Natural killer cell (primary cell): ENCODE measurements at regions of chr19 and their contacts with region 1.

Region 1: DNA sequence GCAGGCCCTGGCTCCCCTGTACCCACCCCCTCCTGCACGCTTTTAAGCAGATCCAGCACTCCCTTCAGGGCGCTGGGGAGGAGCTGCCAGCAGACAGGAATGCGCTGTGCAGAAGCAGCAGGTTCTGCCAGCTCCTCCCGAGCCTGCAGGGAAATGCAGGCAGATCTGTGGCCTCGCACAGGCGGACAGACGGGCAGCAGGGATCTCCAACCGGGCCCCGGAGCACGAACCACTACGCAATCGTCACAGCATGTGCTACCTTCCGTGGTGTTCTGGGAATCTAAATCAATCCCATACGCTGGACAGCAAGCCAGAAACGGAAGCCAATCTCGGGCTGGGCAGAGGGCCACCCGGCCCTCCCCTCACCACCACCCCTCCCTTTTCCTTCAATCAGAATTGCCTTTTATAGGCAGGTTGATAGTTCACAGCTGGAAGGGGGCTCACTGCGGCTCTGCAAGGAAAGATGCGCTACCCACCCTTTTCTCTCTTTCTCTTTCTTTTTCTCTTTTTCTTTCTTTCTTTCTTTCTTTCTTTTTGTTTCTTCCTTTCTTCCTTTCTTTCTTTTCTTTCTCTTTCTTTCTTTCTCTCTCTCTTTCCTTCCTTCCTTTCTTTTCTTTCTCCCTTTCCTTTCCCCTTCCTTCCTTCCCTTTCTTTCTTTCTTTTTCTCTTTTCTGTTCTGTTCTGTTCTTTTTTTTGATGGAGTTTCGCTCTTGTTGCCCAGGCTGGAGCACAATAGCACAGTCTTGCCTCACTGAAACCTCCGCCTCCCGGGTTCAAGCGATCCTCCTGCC is 99.9 kb downstream of the GNG7 start:
- DNase-seq: no peak
- ATAC-seq: no peak
- H3K4me3 ChIP-seq: no peak overlapping the region
- H3K4me3 Mint-ChIP-seq: no peak overlapping the region
- H3K27ac ChIP-seq: no peak overlapping the region
- H3K27ac Mint-ChIP-seq: no peak overlapping the region
- H3K4me1 ChIP-seq: peaks cover 25% of the 10 kb centered on the region
- H3K4me1 Mint-ChIP-seq: peaks cover 12 to 13% of the 10 kb centered on the region in 2 donors
- H3K27me3 ChIP-seq: no peaks in the 10 kb centered on the region
- H3K27me3 Mint-ChIP-seq: peaks cover under 1 to 3% of the 10 kb centered on the region in 2 donors
- CTCF ChIP-seq: no peak

Region 2: DNA sequence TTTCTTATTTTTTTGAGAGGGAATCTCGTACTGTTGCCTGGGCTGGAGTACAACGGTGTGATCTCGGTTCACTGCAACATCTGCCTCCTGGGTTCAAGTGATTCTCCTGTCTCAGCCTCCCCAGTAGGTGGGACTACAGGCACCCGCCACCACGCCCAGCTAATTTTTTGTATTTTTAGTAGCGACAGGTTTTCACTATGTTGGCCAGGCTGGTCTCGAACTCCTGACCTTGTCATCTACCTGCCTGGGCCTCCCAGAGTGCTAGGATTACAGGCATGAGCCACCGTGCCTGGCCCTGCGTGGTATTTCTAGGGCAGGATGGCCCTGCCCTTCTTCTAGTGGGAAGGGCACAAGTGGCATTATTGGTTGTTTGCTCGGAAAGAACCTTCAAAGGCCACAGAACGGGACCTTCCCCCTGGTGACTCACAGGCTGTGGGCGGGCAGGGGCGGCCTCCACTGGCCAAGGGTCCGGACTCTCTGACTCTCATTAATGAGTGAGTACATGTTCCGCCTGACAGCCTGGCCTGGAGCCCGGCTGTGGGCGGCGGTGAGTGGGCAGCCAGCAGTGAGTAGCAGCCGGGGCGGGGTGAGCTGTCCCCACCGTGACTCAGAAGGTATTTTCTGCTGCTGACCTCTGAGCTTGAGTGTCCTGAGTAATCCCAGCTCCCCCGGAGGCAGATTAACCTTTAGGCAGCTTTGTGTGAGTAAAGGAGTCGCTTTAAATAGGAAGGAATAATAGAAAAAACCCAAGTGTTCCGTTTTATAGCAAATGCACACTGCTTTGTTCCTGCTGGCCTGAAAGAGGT is 433.8 kb before region 1 on chr19:
- intact Hi-C with region 1: loop called (anchors 5 kb)
- DNase-seq: peak; percentile 70 to 86
- ATAC-seq: peak; percentile 68 to 87 (median 74)
- H3K4me3 ChIP-seq: peak overlapping the region; percentile 12
- H3K4me3 Mint-ChIP-seq: peak overlapping the region; percentile 89
- H3K27ac ChIP-seq: peak overlapping the region; percentile 95
- H3K27ac Mint-ChIP-seq: peak overlapping the region; percentile 94 to 98
- H3K4me1 ChIP-seq: peaks cover 75% of the 10 kb centered on the region
- H3K4me1 Mint-ChIP-seq: peaks cover 43 to 59% of the 10 kb centered on the region in 2 donors
- H3K27me3 ChIP-seq: no peaks in the 10 kb centered on the region
- H3K27me3 Mint-ChIP-seq: no peaks in the 10 kb centered on the region
- CTCF ChIP-seq: no peak

Region 3: DNA sequence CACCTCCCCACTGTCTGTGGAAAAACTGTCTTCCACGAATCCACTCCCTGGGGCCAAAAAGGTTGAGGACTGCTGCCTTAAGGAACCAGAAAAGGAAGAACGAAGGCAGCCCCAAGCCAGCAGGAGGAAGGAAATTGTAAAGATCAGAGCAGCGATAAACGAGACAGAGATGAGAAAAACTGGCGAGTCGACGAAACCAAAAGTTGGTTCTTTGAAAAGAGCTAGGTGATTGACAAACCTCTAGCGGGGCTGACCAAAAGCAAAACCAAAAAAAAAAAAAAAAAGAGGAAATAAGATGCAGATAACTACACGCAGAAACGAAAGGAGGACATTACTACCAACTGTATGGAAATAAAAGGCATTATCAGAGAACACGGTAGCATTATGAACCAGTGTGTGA is 49.7 kb before region 1 on chr19:
- intact Hi-C with region 1: loop called (anchors 2 kb)
- DNase-seq: peak in 1 of 2 donors; percentile 87
- ATAC-seq: peak; percentile 79 to 89 (median 87)
- H3K4me3 ChIP-seq: peak overlapping the region; percentile 43
- H3K4me3 Mint-ChIP-seq: peak overlapping the region; percentile 88
- H3K27ac ChIP-seq: peak overlapping the region; percentile 80
- H3K27ac Mint-ChIP-seq: peak overlapping the region; percentile 78 to 84
- H3K4me1 ChIP-seq: peaks cover 28% of the 10 kb centered on the region
- H3K4me1 Mint-ChIP-seq: peaks cover 24 to 26% of the 10 kb centered on the region in 2 donors
- H3K27me3 ChIP-seq: no peaks in the 10 kb centered on the region
- H3K27me3 Mint-ChIP-seq: no peaks in the 10 kb centered on the region
- CTCF ChIP-seq: no peak